GM12878 (cell line): ENCODE measurements at regions of chr10 and their contacts with region 1.

Region 1: DNA sequence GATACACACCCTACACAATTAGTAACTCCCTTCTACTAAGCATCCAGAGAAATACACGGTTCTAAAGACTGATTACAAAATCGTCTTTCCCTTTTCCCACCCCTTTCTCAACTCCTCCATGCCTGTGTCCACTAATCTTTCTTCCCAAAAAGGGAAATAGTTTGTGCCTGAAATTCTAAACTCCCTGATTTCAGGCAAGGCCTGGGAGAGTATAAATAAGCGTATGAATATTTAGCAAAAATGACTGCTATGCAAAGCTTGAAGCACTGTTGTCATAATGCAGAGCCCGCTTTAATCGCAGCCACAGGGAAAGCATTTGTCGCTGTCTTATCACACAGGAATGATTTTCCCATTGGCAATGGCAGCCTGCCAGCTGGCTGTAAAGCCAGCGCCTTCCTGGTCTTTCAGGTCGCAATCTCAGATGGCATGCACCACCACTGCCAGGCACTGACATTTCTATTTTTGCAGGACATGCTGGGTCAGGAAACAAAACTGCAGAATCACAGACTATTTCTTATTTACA is 142.9 kb upstream of the PCGF5 start:
- DNase-seq: no peak
- ATAC-seq: no peak
- H3K4me3 ChIP-seq: no peak overlapping the region
- H3K27ac ChIP-seq: no peak overlapping the region
- H3K4me1 ChIP-seq: no peaks in the 10 kb centered on the region
- H3K27me3 ChIP-seq: no peaks in the 10 kb centered on the region
- CTCF ChIP-seq: no peak
- EP300 ChIP-seq: no peak
- POLR2A ChIP-seq: no peak
- RAD21 ChIP-seq: no peak

Region 2: DNA sequence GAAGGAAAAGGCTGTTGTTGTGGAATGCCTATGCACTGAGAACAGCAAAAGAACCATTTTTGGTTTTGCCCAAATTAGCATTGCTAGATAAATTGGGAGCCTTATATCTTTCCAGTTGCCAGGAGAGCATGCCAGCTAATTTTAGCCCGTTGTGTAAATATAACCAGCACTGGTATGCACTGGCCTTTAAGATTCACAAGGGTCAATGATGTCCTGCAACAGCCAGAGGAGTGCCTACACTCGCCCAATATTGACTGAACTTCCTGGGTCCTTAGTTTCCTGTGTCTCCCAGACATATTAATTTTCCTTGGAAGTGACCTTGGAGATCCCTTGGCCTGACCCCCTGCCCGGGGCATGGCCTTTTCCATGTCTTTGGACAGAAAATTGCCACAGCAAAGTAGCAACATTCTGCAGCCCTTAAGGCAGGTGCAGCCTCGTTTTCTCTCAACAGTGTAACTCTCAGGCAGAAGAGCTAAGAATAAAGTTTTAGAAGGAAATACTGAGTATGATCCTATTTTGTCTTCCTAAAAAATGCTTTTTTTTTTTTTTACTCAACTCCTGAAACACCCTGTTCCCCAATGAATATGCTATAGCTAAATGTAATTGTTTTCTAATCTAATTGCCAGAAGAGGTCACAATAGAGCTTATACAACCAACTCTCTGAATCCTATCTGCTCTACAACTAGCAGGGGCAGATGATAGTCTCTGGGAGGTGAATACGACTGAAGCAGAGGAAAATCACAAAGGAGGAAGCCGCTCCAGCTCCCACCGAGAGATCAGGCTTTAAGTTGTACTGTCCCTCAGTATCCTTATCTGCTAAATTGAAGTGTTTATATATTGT is 10.9 kb after region 1 on chr10:
- CTCF ChIA-PET with region 1: interaction called, 11 read pairs
- POLR2A ChIA-PET with region 1: no interaction called
- RAD21 ChIA-PET with region 1: interaction called, 3 read pairs
- SMC1A ChIA-PET with region 1: no interaction called
- in situ Hi-C with region 1: no loop called
- intact Hi-C with region 1: no loop called
- DNase-seq: no peak
- ATAC-seq: peak; percentile 64
- H3K4me3 ChIP-seq: no peak overlapping the region
- H3K27ac ChIP-seq: no peak overlapping the region
- H3K4me1 ChIP-seq: no peaks in the 10 kb centered on the region
- H3K27me3 ChIP-seq: no peaks in the 10 kb centered on the region
- CTCF ChIP-seq: peak in 2 of 3 experiments; percentile 25 to 37; a peak in 3 of 6 replicates
- EP300 ChIP-seq: no peak
- POLR2A ChIP-seq: no peak
- RAD21 ChIP-seq: peak; percentile 75